ENCODE measurements at regions of chr1 and their contacts with region 1.

Region 1: GRCh38 chr1:170929835-170930554 is 5.3 kb upstream of the MROH9 start:
- DNase-seq: peak; percentile 68
- H3K4me3 ChIP-seq: no peak overlapping the region
- H3K27me3 ChIP-seq: no peaks in the 10 kb centered on the region
- CTCF ChIP-seq: peak; percentile 72

Region 2: GRCh38 chr1:170910273-170910672 is 19.7 kb before region 1 on chr1:
- CTCF ChIA-PET with region 1: interaction called, 12 read pairs
- POLR2A ChIA-PET with region 1: no interaction called
- DNase-seq: peak; percentile 35
- H3K4me3 ChIP-seq: no peak overlapping the region
- H3K27me3 ChIP-seq: no peaks in the 10 kb centered on the region
- CTCF ChIP-seq: no peak